ENCODE measurements at regions of chr1 and their contacts with region 1.

Region 1: GRCh38 chr1:75265792-75266191 is 131.6 kb downstream of the LHX8 start:
- DNase-seq: peak; percentile 74
- H3K4me3 ChIP-seq: no peak overlapping the region
- H3K27ac ChIP-seq: no peak overlapping the region
- H3K4me1 ChIP-seq: no peaks in the 10 kb centered on the region
- H3K27me3 ChIP-seq: no peaks in the 10 kb centered on the region
- CTCF ChIP-seq: peak; percentile 47 to 50
- POLR2A ChIP-seq: no peak

Region 2: GRCh38 chr1:75092141-75092540 is 173.7 kb before region 1 on chr1:
- CTCF ChIA-PET with region 1: no interaction called
- POLR2A ChIA-PET with region 1: no interaction called
- dilution Hi-C with region 1: no loop called
- intact Hi-C with region 1: no loop called
- DNase-seq: no peak
- H3K4me3 ChIP-seq: no peak overlapping the region
- H3K27ac ChIP-seq: no peak overlapping the region
- H3K4me1 ChIP-seq: no peaks in the 10 kb centered on the region
- H3K27me3 ChIP-seq: no peaks in the 10 kb centered on the region
- CTCF ChIP-seq: no peak
- POLR2A ChIP-seq: no peak

Region 3: DNA sequence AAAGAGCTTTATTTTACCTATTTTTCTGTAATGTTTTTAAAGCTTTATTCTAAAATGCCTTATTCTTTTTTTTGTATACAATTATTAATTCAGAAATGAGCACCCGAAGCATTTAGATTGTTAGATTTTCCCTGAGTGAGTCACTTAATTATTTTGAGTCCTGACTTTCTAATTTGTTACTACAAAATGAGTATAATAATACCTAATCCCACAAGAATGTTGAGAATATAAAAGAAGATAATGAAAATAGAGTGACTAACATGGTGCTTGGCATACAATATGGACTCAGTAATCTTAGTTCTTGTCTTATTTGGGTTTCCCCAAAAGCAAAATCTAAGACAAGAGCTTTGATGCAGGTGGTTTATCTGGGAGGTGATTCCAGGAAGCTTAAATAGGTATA is 10.6 kb after region 1 on chr1:
- CTCF ChIA-PET with region 1: interaction called, 42 read pairs
- POLR2A ChIA-PET with region 1: no interaction called
- dilution Hi-C with region 1: no loop called
- intact Hi-C with region 1: no loop called
- DNase-seq: no peak
- H3K4me3 ChIP-seq: no peak overlapping the region
- H3K27ac ChIP-seq: no peak overlapping the region
- H3K4me1 ChIP-seq: no peaks in the 10 kb centered on the region
- H3K27me3 ChIP-seq: no peaks in the 10 kb centered on the region
- CTCF ChIP-seq: no peak
- POLR2A ChIP-seq: no peak

Region 4: GRCh38 chr1:75472971-75473603 is 207.3 kb after region 1 on chr1:
- CTCF ChIA-PET with region 1: interaction called, 13 read pairs
- POLR2A ChIA-PET with region 1: no interaction called
- dilution Hi-C with region 1: no loop called
- intact Hi-C with region 1: no loop called
- DNase-seq: peak; percentile 80
- H3K4me3 ChIP-seq: no peak overlapping the region
- H3K27ac ChIP-seq: peak overlapping the region; percentile 59
- H3K4me1 ChIP-seq: peaks cover 23% of the 10 kb centered on the region
- H3K27me3 ChIP-seq: no peaks in the 10 kb centered on the region
- CTCF ChIP-seq: no peak
- POLR2A ChIP-seq: no peak

Region 5: DNA sequence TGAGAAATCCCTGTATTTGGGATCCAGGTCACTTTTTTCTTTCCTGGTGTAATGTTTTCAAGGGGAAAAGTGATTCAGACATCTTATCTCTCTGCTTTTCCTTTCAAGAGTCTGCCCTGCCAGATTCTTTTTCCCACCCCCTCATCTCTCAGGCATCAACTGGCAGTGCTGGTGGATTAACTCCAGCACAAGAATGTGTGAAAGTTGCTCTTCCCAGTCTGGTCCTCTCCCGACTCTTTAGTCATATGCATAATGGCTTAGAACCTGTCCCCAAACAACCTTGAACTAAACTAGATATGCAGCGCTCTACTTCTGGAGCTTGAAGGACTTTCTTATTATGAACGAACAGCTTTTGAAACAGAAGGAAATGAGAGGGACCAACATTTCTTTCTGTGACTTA is 256.6 kb after region 1 on chr1:
- CTCF ChIA-PET with region 1: interaction called, 6 read pairs
- POLR2A ChIA-PET with region 1: no interaction called
- dilution Hi-C with region 1: no loop called
- intact Hi-C with region 1: loop called (anchors 5 kb)
- DNase-seq: peak; percentile 93
- H3K4me3 ChIP-seq: peak overlapping the region in 1 of 3 experiments; percentile 28
- H3K27ac ChIP-seq: peak overlapping the region; percentile 77
- H3K4me1 ChIP-seq: peaks cover 29% of the 10 kb centered on the region
- H3K27me3 ChIP-seq: no peaks in the 10 kb centered on the region
- CTCF ChIP-seq: no peak
- POLR2A ChIP-seq: peak; percentile 26

Region 6: DNA sequence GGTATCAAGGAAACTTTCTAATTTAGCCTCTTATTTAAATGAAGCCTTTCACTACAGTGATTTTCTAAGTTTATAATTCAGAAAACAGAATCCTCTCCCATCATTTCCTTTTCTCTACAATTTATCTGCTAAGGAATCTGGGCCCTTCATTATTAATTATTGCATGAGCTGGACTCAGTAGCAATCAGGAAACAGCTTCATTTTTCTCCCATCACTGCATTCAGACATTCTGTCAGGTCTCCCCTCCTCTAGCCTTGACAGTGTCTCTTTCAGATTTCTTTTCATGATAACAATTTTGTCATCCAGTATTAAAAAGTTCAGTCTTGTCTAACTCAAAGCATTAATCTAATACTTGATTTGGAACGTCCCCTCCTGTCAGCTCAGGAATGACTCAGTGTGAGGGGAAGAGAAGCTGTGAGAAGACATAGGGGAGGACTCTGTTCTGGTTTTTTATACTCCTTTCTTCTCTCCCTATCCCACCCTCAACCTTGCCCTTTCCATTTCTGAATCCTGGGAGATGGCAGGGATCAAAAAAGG is 317.0 kb after region 1 on chr1:
- CTCF ChIA-PET with region 1: interaction called, 143 read pairs
- POLR2A ChIA-PET with region 1: no interaction called
- dilution Hi-C with region 1: no loop called
- intact Hi-C with region 1: loop called (anchors 1 kb)
- DNase-seq: peak; percentile 52
- H3K4me3 ChIP-seq: no peak overlapping the region
- H3K27ac ChIP-seq: no peak overlapping the region
- H3K4me1 ChIP-seq: peaks cover 28% of the 10 kb centered on the region
- H3K27me3 ChIP-seq: no peaks in the 10 kb centered on the region
- CTCF ChIP-seq: peak in 1 of 2 donors; percentile 19
- POLR2A ChIP-seq: no peak

Region 7: DNA sequence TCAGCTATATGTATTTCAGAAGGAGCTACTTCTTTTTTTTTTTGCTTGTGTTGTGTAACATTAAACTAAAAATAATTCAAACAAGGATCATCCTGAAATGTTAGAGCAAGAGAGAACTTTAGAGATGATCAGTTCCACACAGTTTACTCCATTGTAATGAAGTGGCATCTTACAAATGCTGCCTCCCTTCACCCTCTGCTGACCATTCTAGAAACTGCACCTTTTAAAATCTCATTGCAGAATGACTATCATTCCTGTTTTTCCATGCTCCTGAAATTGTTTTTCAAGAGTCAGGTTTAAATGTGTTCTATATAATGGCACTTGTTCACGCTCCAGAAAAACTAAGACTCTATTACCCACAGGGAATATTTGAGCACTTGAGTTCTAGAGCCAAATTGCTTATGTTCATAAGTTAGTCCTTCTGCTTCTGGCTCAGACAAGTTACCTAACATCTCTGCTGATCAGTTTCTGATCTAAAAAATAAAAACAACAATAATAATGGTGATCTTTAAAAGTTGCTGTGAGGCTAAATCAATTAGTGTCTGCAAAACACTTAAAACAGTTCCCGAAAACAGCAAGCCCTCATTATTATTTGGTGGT is 366.7 kb after region 1 on chr1:
- CTCF ChIA-PET with region 1: interaction called, 147 read pairs
- POLR2A ChIA-PET with region 1: no interaction called
- dilution Hi-C with region 1: no loop called
- intact Hi-C with region 1: loop called (anchors 1 kb)
- DNase-seq: peak; percentile 70
- H3K4me3 ChIP-seq: no peak overlapping the region
- H3K27ac ChIP-seq: no peak overlapping the region
- H3K4me1 ChIP-seq: no peaks in the 10 kb centered on the region
- H3K27me3 ChIP-seq: no peaks in the 10 kb centered on the region
- CTCF ChIP-seq: peak; percentile 64 to 70
- POLR2A ChIP-seq: no peak